ENCODE measurements at regions of chr16 and their contacts with region 1.

Region 1: DNA sequence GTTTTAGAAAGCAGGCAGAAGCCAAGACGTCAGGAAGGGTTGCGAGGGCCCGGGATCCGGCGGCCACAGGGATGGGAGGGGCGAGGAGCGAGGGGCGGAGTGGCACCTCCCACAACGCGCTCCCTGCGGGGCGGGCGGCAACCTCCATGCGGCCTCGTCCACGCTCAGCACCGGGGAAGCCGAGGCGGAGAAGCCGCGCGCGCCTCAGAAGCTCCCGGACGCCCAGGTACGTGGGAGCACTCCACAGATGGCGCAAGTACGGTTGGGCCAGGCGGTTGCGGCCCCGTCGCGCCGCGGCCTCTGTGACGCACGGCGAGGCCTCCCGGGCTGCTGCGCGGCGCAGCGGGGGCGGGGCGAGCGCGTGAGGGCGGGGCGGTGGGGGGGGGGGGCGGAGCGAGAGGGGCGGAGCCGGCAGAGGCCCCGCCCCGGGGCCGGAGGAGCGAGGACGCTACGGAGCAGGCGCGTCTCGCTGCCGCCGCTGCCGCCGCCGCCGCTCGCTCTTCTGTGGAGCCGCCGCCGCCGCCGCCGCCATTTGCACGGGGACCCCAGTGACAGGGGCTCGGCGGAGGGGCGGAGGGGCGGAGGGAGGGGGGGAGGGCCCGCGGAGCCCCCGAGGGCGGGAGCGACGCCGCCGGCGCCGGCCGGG is at the start of gene TENT4B:
- DNase-seq: peak; percentile 90
- H3K4me3 Mint-ChIP-seq: peak within 1 kb of the TSS; percentile 80
- H3K27ac Mint-ChIP-seq: peak within 1 kb of the TSS; percentile 91
- H3K4me1 Mint-ChIP-seq: peaks cover 32% of the 10 kb centered on the region
- H3K27me3 Mint-ChIP-seq: no peaks in the 10 kb centered on the region
- total RNA-seq, gene TENT4B: 14.4 to 14.8 TPM

Region 2: GRCh38 chr16:50065624-50066481 is 87.1 kb before region 1 on chr16 and contains the start of gene HEATR3:
- CTCF ChIA-PET with region 1: interaction called, 3 read pairs
- POLR2A ChIA-PET with region 1: interaction called, 3 read pairs
- intact Hi-C with region 1: loop called (anchors 1 kb)
- DNase-seq: peak; percentile 98
- H3K4me3 Mint-ChIP-seq: peak within 1 kb of the TSS; percentile 90
- H3K27ac Mint-ChIP-seq: peak within 1 kb of the TSS; percentile 87
- H3K4me1 Mint-ChIP-seq: peaks cover 31% of the 10 kb centered on the region
- H3K27me3 Mint-ChIP-seq: no peaks in the 10 kb centered on the region
- total RNA-seq, gene HEATR3: 17.6 to 18.6 TPM

Region 3: DNA sequence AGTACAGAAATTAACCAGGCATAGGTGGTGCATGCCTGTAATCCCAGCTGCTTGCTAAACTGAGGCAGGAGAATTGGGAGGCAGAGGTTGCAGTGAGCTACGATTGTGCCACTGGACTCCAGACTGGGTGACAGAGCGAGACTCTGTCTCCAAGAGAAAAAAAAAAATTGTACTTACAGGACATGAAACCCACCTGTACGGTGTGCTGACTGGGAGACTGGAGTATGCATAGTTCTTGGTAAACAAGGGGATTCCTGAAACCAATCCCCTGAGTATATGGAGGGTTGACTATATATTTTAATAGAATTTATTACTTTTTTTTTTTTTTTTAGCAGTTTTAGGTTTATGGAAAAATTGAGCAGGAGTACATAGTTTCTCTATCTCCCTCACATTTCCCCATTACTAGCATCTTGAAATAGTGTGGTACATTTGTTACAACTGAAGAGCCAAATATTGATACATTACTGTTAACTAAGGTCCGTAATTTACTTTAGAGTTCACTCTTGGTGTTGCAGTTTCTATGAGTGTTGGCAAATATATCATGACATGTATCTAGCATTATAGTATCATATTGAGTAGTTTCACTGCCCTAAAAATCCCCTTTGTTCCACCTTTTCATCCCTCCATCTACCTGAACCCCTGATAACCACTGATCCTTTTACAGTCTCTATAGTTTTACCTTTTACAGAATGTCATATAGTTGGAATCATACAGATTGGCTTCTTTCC is 19.4 kb after region 1 on chr16:
- CTCF ChIA-PET with region 1: interaction called, 7 read pairs
- POLR2A ChIA-PET with region 1: no interaction called
- intact Hi-C with region 1: loop called (anchors 2 kb)
- DNase-seq: no peak
- H3K4me3 Mint-ChIP-seq: no peak overlapping the region
- H3K27ac Mint-ChIP-seq: no peak overlapping the region
- H3K4me1 Mint-ChIP-seq: peaks cover 56% of the 10 kb centered on the region
- H3K27me3 Mint-ChIP-seq: no peaks in the 10 kb centered on the region

Region 4: DNA sequence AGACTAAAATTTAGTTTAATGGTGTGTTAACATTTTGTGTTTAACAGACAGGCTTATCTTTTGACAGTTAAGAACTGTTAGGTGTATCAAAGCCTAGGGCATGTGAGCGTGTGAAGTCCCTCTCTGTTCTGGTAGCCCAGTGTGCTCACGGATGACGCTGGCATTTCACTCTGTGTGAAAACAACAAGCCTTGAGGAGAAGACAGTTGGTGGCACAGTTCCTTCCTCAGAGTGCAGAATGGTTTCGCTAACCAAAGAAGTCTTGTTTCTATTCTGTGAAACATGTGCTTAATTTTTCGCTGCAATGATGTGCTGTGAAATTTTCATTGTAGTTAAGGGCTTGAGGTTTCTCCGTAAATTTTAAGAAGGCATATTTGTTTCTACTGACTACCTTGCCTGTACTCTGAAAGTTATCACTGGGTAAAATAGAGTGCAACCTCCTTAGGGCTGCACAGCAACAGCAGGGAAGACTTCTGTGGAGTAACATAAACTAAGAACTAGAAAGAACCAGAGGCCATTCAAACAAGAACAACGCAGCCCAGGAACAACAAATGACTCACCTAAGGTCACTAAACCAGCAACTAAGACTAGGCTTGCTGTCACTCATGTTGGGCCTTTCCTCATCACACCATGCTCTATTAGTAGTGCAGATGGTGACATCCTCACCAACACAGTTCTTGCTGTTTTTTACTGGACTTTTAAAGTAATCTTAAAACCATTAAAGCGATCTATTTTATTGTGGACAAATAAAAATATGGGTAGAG is 182.4 kb after region 1 on chr16:
- CTCF ChIA-PET with region 1: no interaction called
- POLR2A ChIA-PET with region 1: no interaction called
- intact Hi-C with region 1: loop called (anchors 2 kb)
- DNase-seq: peak; percentile 70
- H3K4me3 Mint-ChIP-seq: peak overlapping the region; percentile 32
- H3K27ac Mint-ChIP-seq: peak overlapping the region; percentile 90
- H3K4me1 Mint-ChIP-seq: peaks cover 68% of the 10 kb centered on the region
- H3K27me3 Mint-ChIP-seq: no peaks in the 10 kb centered on the region

Region 5: GRCh38 chr16:50741808-50742575 is 589.1 kb after region 1 on chr16 and contains the start of gene CYLD:
- CTCF ChIA-PET with region 1: no interaction called
- POLR2A ChIA-PET with region 1: no interaction called
- intact Hi-C with region 1: loop called (anchors 2 kb)
- DNase-seq: peak; percentile 100
- H3K4me3 Mint-ChIP-seq: peak within 1 kb of the TSS; percentile 94
- H3K27ac Mint-ChIP-seq: peak within 1 kb of the TSS; percentile 97
- H3K4me1 Mint-ChIP-seq: peaks cover 44% of the 10 kb centered on the region
- H3K27me3 Mint-ChIP-seq: no peaks in the 10 kb centered on the region
- total RNA-seq, gene CYLD: 133 to 135 TPM

Region 6: DNA sequence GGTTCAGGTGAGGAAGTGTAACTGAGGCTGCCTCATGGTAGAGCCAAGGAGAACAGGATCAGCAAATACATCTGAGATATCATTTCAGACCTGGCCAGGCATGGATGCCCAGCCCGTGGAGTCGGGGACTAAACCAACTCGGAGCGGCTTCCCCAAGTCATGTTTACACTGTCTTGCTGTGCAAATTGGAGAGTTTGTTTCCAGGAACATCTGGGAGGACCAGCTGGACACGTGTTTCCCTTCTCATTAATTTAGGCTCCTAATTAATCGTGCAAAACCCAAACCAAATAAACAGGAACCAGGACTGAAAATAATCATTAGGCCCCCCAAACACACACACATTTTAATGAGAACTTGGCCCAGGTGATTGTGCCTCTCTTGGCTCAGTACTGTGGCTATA is 1069.1 kb after region 1 on chr16:
- CTCF ChIA-PET with region 1: no interaction called
- POLR2A ChIA-PET with region 1: no interaction called
- intact Hi-C with region 1: no loop called
- DNase-seq: no peak
- H3K4me3 Mint-ChIP-seq: no peak overlapping the region
- H3K27ac Mint-ChIP-seq: no peak overlapping the region
- H3K4me1 Mint-ChIP-seq: no peaks in the 10 kb centered on the region
- H3K27me3 Mint-ChIP-seq: no peaks in the 10 kb centered on the region

Measured in activated CD4-positive, alpha-beta memory T cell treated with anti-CD3 and anti-CD28 coated beads for 36 hours (primary cell).